Mammary epithelial cell (primary cell): ENCODE measurements at regions of chr13 and their contacts with region 1.

Region 1: GRCh38 chr13:99087096-99087953 is 109.5 kb upstream of the DOCK9 start:
- DNase-seq: peak; percentile 88
- H3K4me3 ChIP-seq: peak overlapping the region; percentile 76 to 85 (median 84)
- H3K27ac ChIP-seq: peak overlapping the region; percentile 81
- H3K4me1 ChIP-seq: peaks cover 21% of the 10 kb centered on the region
- H3K27me3 ChIP-seq: no peaks in the 10 kb centered on the region
- CTCF ChIP-seq: peak in 1 of 2 donors; percentile 34

Region 2: DNA sequence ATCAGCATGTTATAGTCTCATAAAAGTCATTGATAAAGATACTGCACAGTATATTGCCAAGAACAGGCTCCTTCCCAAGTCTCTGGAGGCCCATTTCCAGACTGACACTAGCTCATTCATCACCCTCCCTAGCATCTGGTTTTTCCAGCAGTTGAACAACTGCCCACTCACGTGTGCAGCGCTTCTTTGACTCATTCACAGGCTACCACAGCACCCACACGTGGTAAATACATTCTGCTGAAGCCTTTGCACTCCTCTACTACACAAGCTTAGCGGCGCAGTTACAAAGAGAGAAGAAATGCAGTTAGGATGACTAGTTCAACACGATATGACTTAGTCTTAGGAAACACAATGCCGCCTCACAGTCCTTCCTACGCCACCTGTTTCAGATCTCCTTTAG is 197.1 kb before region 1 on chr13:
- CTCF ChIA-PET with region 1: no interaction called
- dilution Hi-C with region 1: no loop called
- in situ Hi-C with region 1: no loop called
- intact Hi-C with region 1: loop called (anchors 5 kb)
- DNase-seq: peak; percentile 86
- H3K4me3 ChIP-seq: no peak overlapping the region
- H3K27ac ChIP-seq: peak overlapping the region; percentile 43
- H3K4me1 ChIP-seq: peaks cover 21% of the 10 kb centered on the region
- H3K27me3 ChIP-seq: no peaks in the 10 kb centered on the region
- CTCF ChIP-seq: no peak

Region 3: GRCh38 chr13:98959786-98960605 is 127.3 kb before region 1 on chr13:
- CTCF ChIA-PET with region 1: no interaction called
- dilution Hi-C with region 1: no loop called
- in situ Hi-C with region 1: no loop called
- intact Hi-C with region 1: no loop called
- DNase-seq: no peak
- H3K4me3 ChIP-seq: no peak overlapping the region
- H3K27ac ChIP-seq: no peak overlapping the region
- H3K4me1 ChIP-seq: peaks cover 17% of the 10 kb centered on the region
- H3K27me3 ChIP-seq: no peaks in the 10 kb centered on the region
- CTCF ChIP-seq: no peak

Region 4: GRCh38 chr13:99033814-99034213 is 53.5 kb before region 1 on chr13:
- CTCF ChIA-PET with region 1: no interaction called
- dilution Hi-C with region 1: no loop called
- in situ Hi-C with region 1: no loop called
- intact Hi-C with region 1: no loop called
- DNase-seq: peak; percentile 16
- H3K4me3 ChIP-seq: no peak overlapping the region
- H3K27ac ChIP-seq: no peak overlapping the region
- H3K4me1 ChIP-seq: peaks cover 17% of the 10 kb centered on the region
- H3K27me3 ChIP-seq: no peaks in the 10 kb centered on the region
- CTCF ChIP-seq: peak; percentile 60 to 66

Region 5: DNA sequence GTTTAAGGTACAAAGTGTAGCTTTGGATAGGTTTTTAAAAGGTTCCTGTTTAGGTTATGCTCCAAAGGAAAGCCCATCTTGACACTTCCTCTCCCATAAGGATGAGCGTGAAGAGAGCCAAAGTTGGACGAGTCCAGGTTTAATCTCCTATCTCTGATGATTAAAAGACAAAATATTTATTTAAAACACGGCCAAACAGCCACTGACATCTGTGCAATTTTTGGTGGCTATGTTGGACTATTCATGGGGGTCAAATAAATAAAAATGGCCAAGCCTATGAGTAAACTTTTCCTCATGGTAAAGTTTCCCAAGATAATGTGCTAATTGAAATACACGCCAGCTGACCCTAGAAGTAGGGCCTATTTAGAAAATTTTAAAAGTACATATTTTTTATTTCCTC is 40.5 kb before region 1 on chr13:
- CTCF ChIA-PET with region 1: no interaction called
- dilution Hi-C with region 1: no loop called
- in situ Hi-C with region 1: no loop called
- intact Hi-C with region 1: loop called (anchors 1 kb)
- DNase-seq: no peak
- H3K4me3 ChIP-seq: peak overlapping the region in 1 of 3 experiments; percentile 21
- H3K27ac ChIP-seq: peak overlapping the region; percentile 83
- H3K4me1 ChIP-seq: peaks cover 41% of the 10 kb centered on the region
- H3K27me3 ChIP-seq: no peaks in the 10 kb centered on the region
- CTCF ChIP-seq: no peak

Region 6: DNA sequence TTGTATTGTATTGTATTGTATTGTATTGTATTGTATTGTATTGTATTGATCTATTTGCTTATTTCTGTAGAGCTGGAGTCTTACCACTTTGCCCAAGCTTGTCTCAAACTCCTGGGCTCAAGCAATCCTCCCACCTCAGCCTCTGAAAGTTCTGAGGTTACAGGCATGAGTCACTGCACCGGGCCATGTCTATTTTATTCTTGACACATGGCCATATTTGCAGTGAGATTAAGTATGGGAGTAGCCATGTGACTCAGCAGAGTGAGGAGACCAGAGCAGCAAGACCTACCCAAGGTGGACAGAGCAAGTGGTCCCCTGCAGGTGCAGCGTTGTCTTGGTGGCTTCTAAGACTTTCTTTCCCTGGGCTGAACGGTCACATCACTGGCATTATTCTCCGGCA is 64.2 kb after region 1 on chr13:
- CTCF ChIA-PET with region 1: no interaction called
- dilution Hi-C with region 1: loop called (anchors 5 kb)
- in situ Hi-C with region 1: no loop called
- intact Hi-C with region 1: loop called (anchors 2 kb)
- DNase-seq: peak; percentile 92
- H3K4me3 ChIP-seq: peak overlapping the region in 2 of 3 experiments; percentile 6 to 24
- H3K27ac ChIP-seq: peak overlapping the region; percentile 96
- H3K4me1 ChIP-seq: peaks cover 20% of the 10 kb centered on the region
- H3K27me3 ChIP-seq: no peaks in the 10 kb centered on the region
- CTCF ChIP-seq: no peak

Region 7: GRCh38 chr13:99200432-99201167 is 113.3 kb after region 1 on chr13 and contains the start of gene UBAC2:
- CTCF ChIA-PET with region 1: no interaction called
- dilution Hi-C with region 1: no loop called
- in situ Hi-C with region 1: no loop called
- intact Hi-C with region 1: loop called (anchors 2 kb)
- DNase-seq: peak; percentile 94
- H3K4me3 ChIP-seq: peak within 1 kb of the TSS; percentile 83 to 98 (median 84)
- H3K27ac ChIP-seq: peak within 1 kb of the TSS; percentile 79
- H3K4me1 ChIP-seq: peaks cover 23% of the 10 kb centered on the region
- H3K27me3 ChIP-seq: no peaks in the 10 kb centered on the region
- CTCF ChIP-seq: no peak
- total RNA-seq, gene UBAC2: 48.2 to 57.7 TPM

Region 8: DNA sequence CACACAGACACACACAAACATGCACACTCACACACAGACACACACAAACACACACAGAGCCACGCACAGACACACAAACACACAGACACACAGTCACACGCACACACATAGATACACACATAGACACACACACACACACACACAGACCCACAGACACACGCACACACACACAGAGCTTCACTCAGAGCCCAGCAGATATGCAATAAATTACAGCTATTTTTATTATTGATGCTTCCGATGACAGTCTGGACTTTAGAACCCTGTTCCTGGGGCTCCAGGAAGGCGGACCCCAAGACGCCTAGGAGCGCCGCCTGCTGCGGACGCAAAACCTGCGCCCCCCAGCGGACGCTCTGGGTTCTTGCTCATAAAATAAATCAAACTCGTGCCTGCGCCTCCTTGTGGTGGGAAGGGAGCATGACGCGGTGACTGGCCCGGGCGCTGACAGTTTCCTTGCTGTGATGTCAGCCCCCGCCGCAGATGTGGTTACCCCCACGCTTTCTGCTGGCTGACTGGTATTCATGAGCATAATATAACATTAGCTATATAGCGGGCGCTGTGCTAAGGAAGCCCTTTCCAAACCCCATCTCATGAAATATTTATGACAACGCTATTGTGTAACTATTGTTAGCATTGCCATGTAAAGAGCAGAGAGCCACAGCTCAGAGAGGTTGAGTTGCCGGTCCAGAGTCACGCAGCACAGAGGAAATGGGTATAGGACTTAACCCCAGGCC is 349.5 kb after region 1 on chr13:
- CTCF ChIA-PET with region 1: no interaction called
- dilution Hi-C with region 1: no loop called
- in situ Hi-C with region 1: no loop called
- intact Hi-C with region 1: loop called (anchors 5 kb)
- DNase-seq: peak; percentile 68
- H3K4me3 ChIP-seq: peak overlapping the region in 1 of 3 experiments; percentile 18
- H3K27ac ChIP-seq: no peak overlapping the region
- H3K4me1 ChIP-seq: peaks cover 10% of the 10 kb centered on the region
- H3K27me3 ChIP-seq: no peaks in the 10 kb centered on the region
- CTCF ChIP-seq: peak; percentile 99 to 100